Natural killer cell (primary cell): ENCODE measurements at regions of chr6 and their contacts with region 1.

Region 1: DNA sequence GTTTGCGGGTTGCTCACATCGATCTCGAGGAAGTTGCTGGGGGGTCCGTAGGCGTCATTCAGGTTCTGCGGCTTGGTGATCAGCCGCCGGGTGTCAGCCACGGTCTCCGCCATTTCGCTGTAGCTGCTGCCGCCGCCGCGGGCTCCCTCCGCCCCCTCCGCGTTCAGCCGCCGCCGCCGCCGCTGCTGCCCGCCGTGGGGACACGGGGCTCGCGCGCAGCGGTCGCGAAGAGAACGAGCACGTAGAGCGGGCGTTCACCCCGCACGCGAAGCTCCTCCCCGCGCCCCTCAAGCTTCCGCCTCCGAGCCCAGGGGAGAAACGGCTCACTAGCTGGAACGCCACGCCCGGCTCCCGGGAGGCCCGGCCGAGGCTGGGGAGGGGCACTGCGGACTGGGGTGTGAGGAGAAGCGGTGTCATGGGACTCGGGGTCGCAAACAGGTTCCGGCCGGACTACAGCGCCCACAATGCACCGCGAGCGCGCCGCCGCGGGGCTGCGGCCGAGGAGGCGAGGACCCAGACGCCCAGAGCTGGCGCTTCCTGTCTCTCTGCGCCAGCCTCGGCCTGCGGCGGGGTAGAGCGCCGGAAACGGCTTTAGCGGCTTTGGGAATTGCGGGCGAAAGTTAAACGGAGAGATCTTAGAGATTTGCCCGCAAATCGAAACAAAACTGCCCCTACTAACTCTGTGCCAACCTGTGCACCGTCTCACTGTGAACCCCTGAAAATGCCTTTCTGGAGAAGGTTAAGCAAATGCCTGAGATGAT is at the start of gene SNX3:
- DNase-seq: peak; percentile 91 to 93
- ATAC-seq: peak; percentile 83 to 95 (median 86)
- H3K4me3 ChIP-seq: peak within 1 kb of the TSS; percentile 89
- H3K4me3 Mint-ChIP-seq: peak within 1 kb of the TSS; percentile 93
- H3K27ac ChIP-seq: peak within 1 kb of the TSS; percentile 98
- H3K27ac Mint-ChIP-seq: peak within 1 kb of the TSS; percentile 95 to 96
- H3K4me1 ChIP-seq: peaks cover 23% of the 10 kb centered on the region
- H3K4me1 Mint-ChIP-seq: peaks cover 16 to 34% of the 10 kb centered on the region in 2 donors
- H3K27me3 ChIP-seq: no peaks in the 10 kb centered on the region
- H3K27me3 Mint-ChIP-seq: no peaks in the 10 kb centered on the region
- CTCF ChIP-seq: no peak
- total RNA-seq, gene SNX3: 59.7 to 71.6 (median 70.6) TPM

Region 2: GRCh38 chr6:108074359-108075144 is 186.4 kb before region 1 on chr6 and contains the start of gene OSTM1:
- intact Hi-C with region 1: loop called (anchors 2 kb)
- DNase-seq: peak; percentile 95 to 96
- ATAC-seq: peak; percentile 93 to 99 (median 95)
- H3K4me3 ChIP-seq: peak within 1 kb of the TSS; percentile 77
- H3K4me3 Mint-ChIP-seq: peak within 1 kb of the TSS; percentile 88
- H3K27ac ChIP-seq: peak within 1 kb of the TSS; percentile 74
- H3K27ac Mint-ChIP-seq: peak within 1 kb of the TSS; percentile 83 to 85
- H3K4me1 ChIP-seq: peaks cover 19% of the 10 kb centered on the region
- H3K4me1 Mint-ChIP-seq: peaks cover 11 to 19% of the 10 kb centered on the region in 2 donors
- H3K27me3 ChIP-seq: no peaks in the 10 kb centered on the region
- H3K27me3 Mint-ChIP-seq: peaks cover 5 to 16% of the 10 kb centered on the region in 2 donors
- CTCF ChIP-seq: no peak
- total RNA-seq, gene OSTM1: 39.2 to 56.9 (median 49.1) TPM

Region 3: DNA sequence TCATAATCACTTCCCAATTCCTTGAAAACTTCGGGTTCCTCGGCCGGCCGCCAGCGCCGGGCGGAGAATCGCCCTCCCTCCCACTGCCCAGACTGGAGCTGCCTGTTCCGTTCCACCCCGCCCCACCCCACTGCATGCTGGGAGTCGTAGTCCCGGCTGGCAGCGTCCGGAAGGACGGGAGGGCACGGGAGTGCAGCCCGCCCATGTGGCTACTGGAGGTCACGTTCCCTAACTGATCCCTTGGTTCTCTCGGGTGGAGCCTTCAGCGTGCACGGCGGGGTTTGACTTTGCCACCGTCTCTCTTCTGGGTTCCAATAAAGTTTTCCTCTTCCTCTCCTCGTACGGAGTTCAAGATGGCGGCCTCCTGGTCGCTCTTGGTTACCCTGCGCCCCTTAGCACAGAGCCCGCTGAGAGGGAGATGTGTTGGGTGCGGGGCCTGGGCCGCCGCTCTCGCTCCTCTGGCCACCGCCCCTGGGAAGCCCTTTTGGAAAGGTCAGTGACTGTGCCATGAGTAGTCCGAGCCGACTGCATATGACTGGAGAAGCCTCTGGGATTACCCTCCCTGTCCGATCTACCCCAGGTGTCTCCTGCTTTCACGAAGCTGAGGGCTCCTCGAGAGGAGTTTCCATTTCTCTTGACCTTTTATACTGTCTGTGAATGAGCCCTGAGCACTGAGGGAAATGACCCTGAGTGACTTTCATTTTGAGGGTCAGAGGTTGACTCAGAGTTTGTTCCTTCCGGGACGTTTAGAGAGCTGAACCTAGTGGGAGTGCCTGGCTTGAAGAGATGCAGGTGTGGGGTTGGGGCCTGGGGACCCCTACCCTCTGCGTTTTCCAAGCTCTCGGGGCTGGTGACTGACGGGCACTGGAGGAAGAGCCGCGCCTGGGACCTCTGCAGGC is 34.0 kb after region 1 on chr6 and contains the start of gene AFG1L:
- intact Hi-C with region 1: loop called (anchors 1 kb)
- DNase-seq: peak; percentile 87 to 89
- ATAC-seq: peak; percentile 93 to 98 (median 95)
- H3K4me3 ChIP-seq: peak within 1 kb of the TSS; percentile 84
- H3K4me3 Mint-ChIP-seq: peak within 1 kb of the TSS; percentile 100
- H3K27ac ChIP-seq: peak within 1 kb of the TSS; percentile 92
- H3K27ac Mint-ChIP-seq: peak within 1 kb of the TSS; percentile 99
- H3K4me1 ChIP-seq: peaks cover 13% of the 10 kb centered on the region
- H3K4me1 Mint-ChIP-seq: peaks cover 9 to 11% of the 10 kb centered on the region in 2 donors
- H3K27me3 ChIP-seq: no peaks in the 10 kb centered on the region
- H3K27me3 Mint-ChIP-seq: no peaks in the 10 kb centered on the region
- CTCF ChIP-seq: no peak
- total RNA-seq, gene AFG1L: 4.8 to 9.2 (median 5.2) TPM

Region 4: GRCh38 chr6:108395297-108395696 is 134.3 kb after region 1 on chr6:
- intact Hi-C with region 1: no loop called
- DNase-seq: no peak
- ATAC-seq: no peak
- H3K4me3 ChIP-seq: no peak overlapping the region
- H3K4me3 Mint-ChIP-seq: no peak overlapping the region
- H3K27ac ChIP-seq: no peak overlapping the region
- H3K27ac Mint-ChIP-seq: no peak overlapping the region
- H3K4me1 ChIP-seq: no peaks in the 10 kb centered on the region
- H3K4me1 Mint-ChIP-seq: no peaks in the 10 kb centered on the region
- H3K27me3 ChIP-seq: no peaks in the 10 kb centered on the region
- H3K27me3 Mint-ChIP-seq: no peaks in the 10 kb centered on the region
- CTCF ChIP-seq: no peak

Region 5: GRCh38 chr6:108558372-108559096 is 297.5 kb after region 1 on chr6:
- intact Hi-C with region 1: loop called (anchors 2 kb)
- DNase-seq: peak; percentile 97 to 99
- ATAC-seq: peak; percentile 59 to 80 (median 66)
- H3K4me3 ChIP-seq: peak overlapping the region; percentile 96
- H3K4me3 Mint-ChIP-seq: peak overlapping the region; percentile 96
- H3K27ac ChIP-seq: peak overlapping the region; percentile 100
- H3K27ac Mint-ChIP-seq: peak overlapping the region; percentile 97 to 98
- H3K4me1 ChIP-seq: peaks cover 21% of the 10 kb centered on the region
- H3K4me1 Mint-ChIP-seq: peaks cover 20 to 27% of the 10 kb centered on the region in 2 donors
- H3K27me3 ChIP-seq: no peaks in the 10 kb centered on the region
- H3K27me3 Mint-ChIP-seq: no peaks in the 10 kb centered on the region
- CTCF ChIP-seq: no peak